CD8-positive, alpha-beta T cell (primary cell): ENCODE measurements at regions of chr4 and their contacts with region 1.

Region 1: DNA sequence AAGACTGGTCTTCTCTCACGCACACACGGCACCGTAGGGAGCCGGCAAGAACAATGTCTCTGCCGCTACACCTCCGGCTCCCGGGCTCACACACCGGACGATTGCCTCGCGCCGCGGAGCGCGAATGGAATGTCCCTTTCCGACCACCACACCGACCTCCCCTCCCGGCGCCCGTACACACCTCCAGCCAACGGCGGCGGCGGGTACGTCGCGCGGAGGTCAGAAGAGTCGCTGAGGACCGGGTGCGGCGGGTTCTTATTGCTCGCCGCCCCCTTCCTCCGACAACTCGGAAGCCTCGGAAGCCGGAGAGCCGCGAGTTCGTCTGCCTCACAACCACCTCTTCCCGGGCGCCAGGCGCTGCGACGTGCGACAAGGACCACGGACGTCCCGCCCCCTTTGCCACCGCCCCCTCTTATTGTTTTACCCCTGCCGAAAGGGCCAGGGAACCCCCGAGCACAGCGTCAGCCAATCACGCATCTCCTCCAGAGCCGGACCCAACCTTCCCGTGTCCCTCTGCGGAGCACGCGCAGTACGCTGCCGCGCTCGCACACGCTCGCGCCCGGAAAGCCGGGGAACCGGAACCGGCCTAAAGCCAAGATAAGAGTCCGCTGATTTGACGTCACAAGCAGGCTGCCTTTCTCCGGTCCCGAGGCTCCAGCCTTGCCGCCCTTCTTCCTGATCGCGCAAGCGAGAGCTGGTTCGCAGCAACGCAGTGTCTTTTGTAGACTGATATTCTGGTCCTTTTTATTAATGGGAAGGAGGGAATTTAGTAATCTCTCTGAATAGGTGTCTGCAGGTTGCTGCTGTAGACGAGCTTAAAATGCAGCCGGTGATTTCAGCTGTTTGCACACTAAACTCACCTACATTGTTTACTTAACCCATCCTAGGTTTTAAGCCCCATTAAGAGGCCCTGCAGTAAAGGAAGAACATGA is at the start of gene G3BP2:
- DNase-seq: peak; percentile 96 to 100 (median 97)
- ATAC-seq: peak; percentile 92
- H3K4me3 ChIP-seq: peak within 1 kb of the TSS; percentile 96 to 100
- H3K4me3 Mint-ChIP-seq: peak within 1 kb of the TSS; percentile 99
- H3K27ac ChIP-seq: peak within 1 kb of the TSS; percentile 94 to 99
- H3K27ac Mint-ChIP-seq: peak within 1 kb of the TSS; percentile 98
- H3K4me1 ChIP-seq: peaks cover 45% of the 10 kb centered on the region
- H3K4me1 Mint-ChIP-seq: peaks cover 42% of the 10 kb centered on the region
- H3K27me3 ChIP-seq: no peaks in the 10 kb centered on the region
- H3K27me3 Mint-ChIP-seq: no peaks in the 10 kb centered on the region
- CTCF ChIP-seq: no peak
- total RNA-seq, gene G3BP2: 410 TPM

Region 2: DNA sequence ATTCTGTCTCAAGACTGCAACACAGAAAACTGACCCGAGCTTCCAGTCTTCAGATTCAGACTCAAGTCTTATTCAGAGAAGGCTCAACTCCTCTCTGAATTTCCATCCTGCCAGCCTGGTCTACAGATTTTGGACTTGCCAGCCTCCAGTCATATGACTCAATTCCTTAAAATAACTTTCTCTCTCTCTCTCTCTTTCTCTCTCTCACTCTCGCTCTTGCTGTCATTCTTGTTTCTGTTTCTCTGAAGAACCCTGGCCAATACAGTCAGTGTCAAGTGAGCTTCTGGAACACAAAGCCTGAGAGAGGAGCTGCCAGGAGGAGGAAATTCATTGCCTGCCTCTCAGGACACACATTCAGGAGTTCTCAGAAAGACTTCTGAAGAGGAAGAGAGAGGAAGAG is 585.4 kb before region 1 on chr4:
- CTCF ChIA-PET with region 1: no interaction called
- POLR2A ChIA-PET with region 1: no interaction called
- intact Hi-C with region 1: no loop called
- DNase-seq: no peak
- ATAC-seq: no peak
- H3K4me3 ChIP-seq: no peak overlapping the region
- H3K4me3 Mint-ChIP-seq: no peak overlapping the region
- H3K27ac ChIP-seq: no peak overlapping the region
- H3K27ac Mint-ChIP-seq: no peak overlapping the region
- H3K4me1 ChIP-seq: no peaks in the 10 kb centered on the region
- H3K4me1 Mint-ChIP-seq: no peaks in the 10 kb centered on the region
- H3K27me3 ChIP-seq: no peaks in the 10 kb centered on the region
- H3K27me3 Mint-ChIP-seq: no peaks in the 10 kb centered on the region
- CTCF ChIP-seq: no peak

Region 3: GRCh38 chr4:75514131-75514948 is 159.0 kb before region 1 on chr4 and contains the starts of genes RCHY1 and THAP6:
- CTCF ChIA-PET with region 1: no interaction called
- POLR2A ChIA-PET with region 1: interaction called, 4 read pairs
- intact Hi-C with region 1: loop called (anchors 1 to 5 kb)
- DNase-seq: peak; percentile 84 to 97 (median 92)
- ATAC-seq: peak; percentile 87
- H3K4me3 ChIP-seq: peak within 1 kb of the TSS; percentile 92 to 94
- H3K4me3 Mint-ChIP-seq: no peak within 1 kb of the TSS
- H3K27ac ChIP-seq: peak within 1 kb of the TSS; percentile 96 to 98
- H3K27ac Mint-ChIP-seq: peak within 1 kb of the TSS; percentile 99
- H3K4me1 ChIP-seq: peaks cover 55% of the 10 kb centered on the region
- H3K4me1 Mint-ChIP-seq: peaks cover 63% of the 10 kb centered on the region
- H3K27me3 ChIP-seq: no peaks in the 10 kb centered on the region
- H3K27me3 Mint-ChIP-seq: no peaks in the 10 kb centered on the region
- CTCF ChIP-seq: no peak
- total RNA-seq, gene RCHY1: 45.4 to 52.8 TPM
- total RNA-seq, gene THAP6: 15.3 to 16.3 TPM

Region 4: DNA sequence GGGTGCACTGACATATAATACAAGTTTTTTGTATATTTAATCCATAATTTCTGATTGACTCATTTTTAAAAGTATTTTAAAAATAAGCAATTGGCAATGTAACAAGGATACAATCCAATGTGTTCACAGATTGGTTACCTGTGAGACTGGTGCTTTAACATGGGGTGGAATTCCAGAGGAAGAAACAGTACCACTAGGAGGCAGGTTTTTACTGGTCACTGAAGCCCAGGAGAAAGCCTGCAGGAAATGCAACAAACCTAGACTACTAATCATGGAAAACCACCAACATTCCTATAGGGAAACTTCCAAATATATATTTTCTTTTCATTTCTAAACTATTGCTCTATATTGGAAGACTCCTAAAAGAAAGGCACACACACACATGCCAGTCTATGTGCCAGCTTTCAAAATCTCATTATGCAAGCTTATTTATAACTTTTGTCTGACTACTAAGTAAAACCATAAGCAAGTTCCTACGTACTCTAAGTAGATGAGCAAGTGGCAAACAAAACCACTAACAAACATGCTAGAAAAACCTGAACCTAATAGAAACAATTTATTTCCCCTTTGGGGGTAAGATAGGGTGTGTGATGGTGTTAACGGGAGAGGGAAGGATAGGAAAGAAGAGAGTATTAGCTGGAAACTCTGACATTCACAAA is 19.3 kb before region 1 on chr4:
- CTCF ChIA-PET with region 1: interaction called, 3 read pairs
- POLR2A ChIA-PET with region 1: interaction called, 11 read pairs
- intact Hi-C with region 1: loop called (anchors 1 kb)
- DNase-seq: peak in 2 of 9 experiments; percentile 26 to 45
- ATAC-seq: peak; percentile 15
- H3K4me3 ChIP-seq: no peak overlapping the region
- H3K4me3 Mint-ChIP-seq: peak overlapping the region; percentile 29
- H3K27ac ChIP-seq: peak overlapping the region in 1 of 2 experiments; percentile 10
- H3K27ac Mint-ChIP-seq: peak overlapping the region; percentile 95
- H3K4me1 ChIP-seq: peaks cover 57% of the 10 kb centered on the region
- H3K4me1 Mint-ChIP-seq: peaks cover 68% of the 10 kb centered on the region
- H3K27me3 ChIP-seq: no peaks in the 10 kb centered on the region
- H3K27me3 Mint-ChIP-seq: no peaks in the 10 kb centered on the region
- CTCF ChIP-seq: no peak

Region 5: DNA sequence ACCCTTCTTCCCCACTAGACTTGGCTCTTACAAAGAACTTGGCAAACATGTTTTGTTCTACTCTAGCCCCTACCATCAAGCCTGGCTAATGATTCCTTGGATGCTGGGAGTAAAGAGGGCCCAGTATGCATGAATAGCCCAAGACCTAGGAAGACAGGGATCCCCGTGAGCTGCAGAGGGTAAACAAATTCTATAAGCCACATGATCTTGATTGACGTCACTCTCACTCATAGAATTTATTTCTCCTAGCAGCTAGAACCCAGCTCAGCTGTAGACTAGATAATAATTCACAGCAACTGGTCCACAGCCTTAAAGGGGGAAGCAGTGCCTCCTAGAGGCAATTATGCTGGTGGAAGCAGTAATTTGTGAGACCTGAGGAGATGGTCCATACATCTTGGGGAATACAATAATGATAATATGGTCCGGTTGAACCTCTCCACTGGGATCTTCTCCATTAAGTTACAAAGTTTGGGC is 35.0 kb after region 1 on chr4:
- CTCF ChIA-PET with region 1: interaction called, 10 read pairs
- POLR2A ChIA-PET with region 1: interaction called, 4 read pairs
- intact Hi-C with region 1: loop called (anchors 5 kb)
- DNase-seq: peak in 8 of 9 experiments; percentile 9 to 82 (median 58)
- ATAC-seq: peak; percentile 96
- H3K4me3 ChIP-seq: no peak overlapping the region
- H3K4me3 Mint-ChIP-seq: no peak overlapping the region
- H3K27ac ChIP-seq: no peak overlapping the region
- H3K27ac Mint-ChIP-seq: peak overlapping the region; percentile 78
- H3K4me1 ChIP-seq: peaks cover 4% of the 10 kb centered on the region
- H3K4me1 Mint-ChIP-seq: peaks cover 8% of the 10 kb centered on the region
- H3K27me3 ChIP-seq: no peaks in the 10 kb centered on the region
- H3K27me3 Mint-ChIP-seq: no peaks in the 10 kb centered on the region
- CTCF ChIP-seq: peak; percentile 75

Region 6: GRCh38 chr4:75940692-75941253 is 267.5 kb after region 1 on chr4 and contains the start of gene NAAA:
- CTCF ChIA-PET with region 1: no interaction called
- POLR2A ChIA-PET with region 1: interaction called, 14 read pairs
- intact Hi-C with region 1: loop called in 1 of 2 experiments (anchors 2 kb)
- DNase-seq: peak; percentile 44 to 92 (median 72)
- ATAC-seq: peak; percentile 79
- H3K4me3 ChIP-seq: peak within 1 kb of the TSS; percentile 71 to 85
- H3K4me3 Mint-ChIP-seq: peak within 1 kb of the TSS; percentile 95
- H3K27ac ChIP-seq: peak within 1 kb of the TSS; percentile 77 to 88
- H3K27ac Mint-ChIP-seq: peak within 1 kb of the TSS; percentile 95
- H3K4me1 ChIP-seq: peaks cover 5% of the 10 kb centered on the region
- H3K4me1 Mint-ChIP-seq: peaks cover 26% of the 10 kb centered on the region
- H3K27me3 ChIP-seq: no peaks in the 10 kb centered on the region
- H3K27me3 Mint-ChIP-seq: no peaks in the 10 kb centered on the region
- CTCF ChIP-seq: no peak
- total RNA-seq, gene NAAA: 26.1 to 30.4 TPM